Activated T-helper 2 cell treated with anti-CD3 and anti-CD28 coated beads, Interferon-gamma antibody, Interleukin-2, Interleukin-4, amounts not matched to agents 10 μg/mL and 5 μg/mL and 100 μg/mL, durations not matched to agents 14 hours and 24 hours and 36 hours (primary cell): ENCODE measurements at regions of chr9 and their contacts with region 1.

Region 1: GRCh38 chr9:114291064-114291474 is 31.8 kb upstream of the ORM1 start:
- DNase-seq: peak; percentile 51
- H3K4me3 Mint-ChIP-seq: no peak overlapping the region
- H3K27ac Mint-ChIP-seq: no peak overlapping the region
- H3K4me1 Mint-ChIP-seq: no peaks in the 10 kb centered on the region
- H3K27me3 Mint-ChIP-seq: peaks cover 3% of the 10 kb centered on the region

Region 2: GRCh38 chr9:114108016-114108833 is 182.8 kb before region 1 on chr9:
- intact Hi-C with region 1: loop called (anchors 1 kb)
- DNase-seq: peak; percentile 36
- H3K4me3 Mint-ChIP-seq: no peak overlapping the region
- H3K27ac Mint-ChIP-seq: no peak overlapping the region
- H3K4me1 Mint-ChIP-seq: no peaks in the 10 kb centered on the region
- H3K27me3 Mint-ChIP-seq: peaks cover 17% of the 10 kb centered on the region

Region 3: GRCh38 chr9:114155263-114155972 is 135.7 kb before region 1 on chr9 and contains the start of gene COL27A1:
- intact Hi-C with region 1: loop called (anchors 1 kb)
- DNase-seq: peak; percentile 69
- H3K4me3 Mint-ChIP-seq: peak within 1 kb of the TSS; percentile 86
- H3K27ac Mint-ChIP-seq: peak within 1 kb of the TSS; percentile 74
- H3K4me1 Mint-ChIP-seq: peaks cover 11% of the 10 kb centered on the region
- H3K27me3 Mint-ChIP-seq: peaks cover 44% of the 10 kb centered on the region
- total RNA-seq, gene COL27A1: 3.7 and 4.1 TPM in 2 replicates